ENCODE measurements at regions of chr15 and their contacts with region 1.

Region 1: GRCh38 chr15:89423981-89424380 is 72.4 kb downstream of the RHCG start:
- DNase-seq: no peak
- ATAC-seq: peak; percentile 59; the same call in 1 of the 2 replicates
- H3K4me3 Mint-ChIP-seq: no peak overlapping the region
- H3K27ac Mint-ChIP-seq: no peak overlapping the region
- H3K4me1 Mint-ChIP-seq: peaks cover 11% of the 10 kb centered on the region
- H3K27me3 Mint-ChIP-seq: peaks cover 54% of the 10 kb centered on the region
- CTCF ChIP-seq: no peak

Region 2: DNA sequence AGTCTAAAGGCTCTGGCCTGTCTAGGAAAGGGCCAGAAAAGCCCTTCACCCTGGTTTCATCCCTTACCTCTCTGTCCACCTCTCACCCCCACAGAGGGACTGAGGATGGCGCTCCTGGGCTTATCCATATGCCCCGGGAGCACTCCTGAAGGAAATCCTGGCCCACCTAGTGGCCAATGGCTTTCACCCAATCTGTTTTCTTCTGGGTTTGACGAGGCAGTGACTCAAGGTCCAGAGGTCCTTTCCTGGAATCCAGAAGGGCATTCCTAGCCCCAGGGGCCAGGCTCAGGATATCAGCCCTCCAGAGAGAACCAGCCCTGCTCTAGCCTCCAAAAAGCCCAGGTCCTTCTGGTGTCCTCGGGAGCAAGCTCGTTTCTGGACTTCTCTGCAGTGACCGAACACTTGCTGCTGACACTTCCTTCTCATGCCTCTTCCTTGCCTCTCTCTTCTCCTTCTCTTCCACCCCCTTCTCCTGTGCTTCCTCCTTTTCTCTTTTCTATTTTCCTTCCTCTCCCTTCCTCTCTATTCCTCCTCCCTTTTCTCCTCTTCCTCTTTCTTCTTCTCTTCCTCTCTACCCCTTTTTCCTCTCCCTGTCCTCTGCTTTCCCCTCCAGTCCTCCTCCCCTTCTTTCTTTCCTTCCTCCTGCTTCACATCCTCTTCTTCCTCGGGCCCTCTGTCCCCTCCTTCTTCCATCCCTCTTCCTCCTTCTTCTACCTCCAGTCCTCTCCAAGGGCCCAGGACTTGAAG is 12.8 kb after region 1 on chr15:
- CTCF ChIA-PET with region 1: interaction called, 96 read pairs
- POLR2A ChIA-PET with region 1: no interaction called
- DNase-seq: no peak
- ATAC-seq: peak; percentile 59
- H3K4me3 Mint-ChIP-seq: no peak overlapping the region
- H3K27ac Mint-ChIP-seq: no peak overlapping the region; the same call in 1 of the 2 replicates
- H3K4me1 Mint-ChIP-seq: peaks cover 12% of the 10 kb centered on the region
- H3K27me3 Mint-ChIP-seq: peaks cover 24% of the 10 kb centered on the region
- CTCF ChIP-seq: no peak

Region 3: DNA sequence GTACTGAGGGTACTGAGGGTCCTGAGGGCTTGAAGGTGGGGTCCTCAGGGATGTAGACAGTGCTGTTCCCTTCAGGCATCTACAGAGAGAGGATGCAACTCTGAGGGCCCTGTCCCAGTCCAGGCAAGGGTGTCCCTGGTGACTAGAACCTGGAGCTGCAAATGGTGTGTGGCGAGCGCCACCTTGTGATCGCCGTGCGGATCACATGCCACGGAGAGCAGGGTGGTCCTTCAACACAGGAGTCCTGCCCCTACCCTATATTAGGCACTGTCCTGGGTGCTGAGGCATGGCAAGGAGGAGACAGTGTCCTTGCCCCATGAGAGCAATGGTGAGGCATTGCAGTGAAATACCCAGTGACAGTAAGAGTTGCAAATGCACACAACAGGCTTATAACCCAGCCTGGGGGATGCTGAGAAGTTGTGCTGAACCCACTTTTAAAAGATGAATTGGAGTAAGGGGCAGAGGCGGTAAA is 48.8 kb after region 1 on chr15:
- CTCF ChIA-PET with region 1: interaction called, 55 read pairs
- POLR2A ChIA-PET with region 1: no interaction called
- DNase-seq: peak; percentile 95
- ATAC-seq: peak; percentile 92
- H3K4me3 Mint-ChIP-seq: no peak overlapping the region
- H3K27ac Mint-ChIP-seq: no peak overlapping the region
- H3K4me1 Mint-ChIP-seq: peaks cover 26% of the 10 kb centered on the region
- H3K27me3 Mint-ChIP-seq: peaks cover 30% of the 10 kb centered on the region
- CTCF ChIP-seq: peak; percentile 86

Region 4: DNA sequence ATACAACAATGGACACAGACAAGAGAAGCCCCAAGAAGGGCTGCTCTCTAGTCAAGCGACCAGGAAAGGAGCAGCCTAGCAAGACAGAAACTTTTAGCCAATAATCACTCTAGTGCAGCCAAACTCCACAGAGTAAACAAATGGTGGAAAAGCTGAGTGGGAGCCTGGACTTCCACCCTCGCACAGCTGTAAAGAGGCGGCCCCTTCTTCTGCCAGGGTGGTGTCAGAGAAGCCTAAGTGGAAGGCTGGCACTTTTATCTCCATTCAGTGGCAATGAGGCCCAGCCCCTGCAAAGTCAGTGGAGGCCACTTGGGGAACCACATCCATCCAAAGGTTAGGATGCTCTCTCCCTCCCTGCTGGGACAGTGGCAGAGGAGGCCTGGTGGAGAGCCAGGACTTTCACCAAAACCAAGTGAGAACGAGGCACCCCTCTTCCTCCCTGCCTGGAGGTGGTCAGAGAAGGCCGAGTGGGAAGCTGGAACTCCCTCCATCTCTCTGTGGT is 135.8 kb after region 1 on chr15:
- CTCF ChIA-PET with region 1: no interaction called
- POLR2A ChIA-PET with region 1: no interaction called
- DNase-seq: no peak
- ATAC-seq: no peak; the same call in 1 of the 2 replicates
- H3K4me3 Mint-ChIP-seq: no peak overlapping the region
- H3K27ac Mint-ChIP-seq: no peak overlapping the region
- H3K4me1 Mint-ChIP-seq: peaks cover 3% of the 10 kb centered on the region; the same call in 1 of the 2 replicates
- H3K27me3 Mint-ChIP-seq: peaks cover 4% of the 10 kb centered on the region; the same call in 1 of the 2 replicates
- CTCF ChIP-seq: no peak

Measured in WTC11 (cell line).